PC-3 (cell line): ENCODE measurements at regions of chr2 and their contacts with region 1.

Region 1: DNA sequence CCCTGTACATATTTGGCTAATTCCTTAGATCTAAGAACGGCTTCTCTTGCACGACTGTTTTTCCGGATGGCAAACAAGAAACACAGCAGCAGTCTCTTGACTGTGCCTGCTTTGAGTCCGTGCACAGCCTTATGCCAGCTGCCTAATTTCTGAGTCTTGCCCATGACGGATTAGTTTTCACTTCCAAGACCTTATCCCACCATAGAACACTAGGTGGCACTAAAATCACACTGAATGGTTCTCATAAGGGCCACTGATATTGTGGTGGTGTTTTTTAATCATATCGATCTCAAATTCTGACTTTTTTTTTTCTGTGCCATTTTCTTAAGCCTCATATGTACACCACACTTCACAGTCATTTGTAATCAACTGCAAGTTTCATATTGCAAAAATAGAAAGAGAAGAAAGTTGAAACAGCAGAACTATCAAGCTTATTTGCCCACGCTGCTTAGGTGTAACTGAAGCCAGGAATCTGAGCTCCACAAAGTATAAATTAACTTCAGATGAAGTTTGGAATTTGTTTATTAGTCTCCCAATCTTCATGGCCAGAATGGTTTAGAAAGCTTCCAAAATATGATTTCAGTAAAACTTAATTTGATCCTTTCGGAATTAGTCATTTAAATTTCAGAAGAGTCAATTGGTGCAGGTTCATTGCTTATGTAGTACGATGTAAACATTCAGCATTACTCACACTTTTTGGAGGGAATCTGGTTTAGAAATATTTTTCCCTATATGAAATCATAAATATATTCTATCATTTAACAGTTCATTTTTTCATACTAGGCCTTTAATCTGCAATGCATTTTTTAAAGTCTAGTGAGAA is 45.5 kb upstream of the SCN7A start:
- DNase-seq: peak; percentile 95
- ATAC-seq: peak; percentile 98
- H3K4me3 ChIP-seq: peak overlapping the region; percentile 43
- H3K27ac ChIP-seq: no peak overlapping the region
- H3K4me1 ChIP-seq: peaks cover 8% of the 10 kb centered on the region; the same call in 1 of the 2 replicates
- H3K27me3 ChIP-seq: peaks cover 20% of the 10 kb centered on the region; the same call in 1 of the 2 replicates
- CTCF ChIP-seq: peak; percentile 99

Region 2: DNA sequence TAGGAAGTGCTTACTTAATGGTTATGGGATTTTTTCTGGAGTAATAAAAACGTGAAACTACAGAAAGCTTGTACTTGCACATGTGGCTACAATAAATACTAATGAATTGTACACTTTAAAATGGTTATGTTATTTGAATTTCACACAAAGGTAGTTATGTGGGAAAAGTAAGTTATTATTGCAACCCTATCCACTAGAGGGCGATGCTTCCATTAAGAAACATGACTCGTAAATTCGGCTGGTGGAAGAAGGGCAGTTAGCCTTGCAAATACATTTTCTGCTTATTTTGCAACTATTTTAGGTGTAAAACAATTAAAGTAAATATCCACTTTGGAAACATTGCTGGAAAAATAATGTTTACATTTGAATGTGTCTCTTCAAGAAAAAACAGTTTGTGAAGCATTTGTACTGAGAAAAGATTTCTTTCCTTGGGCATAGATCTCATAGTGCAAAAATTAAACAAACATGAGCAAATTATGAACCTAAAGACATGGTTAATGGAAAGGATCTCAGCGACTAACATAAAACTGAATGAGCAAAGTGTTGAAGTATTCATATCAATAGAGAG is 1138.2 kb before region 1 on chr2:
- CTCF ChIA-PET with region 1: interaction called, 6 read pairs
- POLR2A ChIA-PET with region 1: no interaction called
- intact Hi-C with region 1: loop called (anchors 1 kb)
- DNase-seq: peak; percentile 92
- ATAC-seq: peak; percentile 23
- H3K4me3 ChIP-seq: no peak overlapping the region
- H3K27ac ChIP-seq: no peak overlapping the region
- H3K4me1 ChIP-seq: peaks cover 23% of the 10 kb centered on the region
- H3K27me3 ChIP-seq: no peaks in the 10 kb centered on the region
- CTCF ChIP-seq: peak; percentile 97

Region 3: GRCh38 chr2:165874445-165875039 is 665.0 kb before region 1 on chr2:
- CTCF ChIA-PET with region 1: interaction called, 12 read pairs
- POLR2A ChIA-PET with region 1: no interaction called
- intact Hi-C with region 1: loop called (anchors 5 kb)
- DNase-seq: peak; percentile 93
- ATAC-seq: peak; percentile 94
- H3K4me3 ChIP-seq: peak overlapping the region; percentile 31
- H3K27ac ChIP-seq: no peak overlapping the region
- H3K4me1 ChIP-seq: peaks cover 10% of the 10 kb centered on the region
- H3K27me3 ChIP-seq: no peaks in the 10 kb centered on the region
- CTCF ChIP-seq: peak; percentile 96

Region 4: GRCh38 chr2:166651080-166651675 is 111.6 kb after region 1 on chr2:
- CTCF ChIA-PET with region 1: no interaction called
- POLR2A ChIA-PET with region 1: no interaction called
- intact Hi-C with region 1: loop called (anchors 1 kb)
- DNase-seq: peak; percentile 75
- ATAC-seq: peak; percentile 76
- H3K4me3 ChIP-seq: no peak overlapping the region
- H3K27ac ChIP-seq: 0 out of 2 replicates have a peak overlapping the region, but pooled peaks have one; percentile 6
- H3K4me1 ChIP-seq: peaks cover 33% of the 10 kb centered on the region
- H3K27me3 ChIP-seq: no peaks in the 10 kb centered on the region
- CTCF ChIP-seq: no peak

Region 5: DNA sequence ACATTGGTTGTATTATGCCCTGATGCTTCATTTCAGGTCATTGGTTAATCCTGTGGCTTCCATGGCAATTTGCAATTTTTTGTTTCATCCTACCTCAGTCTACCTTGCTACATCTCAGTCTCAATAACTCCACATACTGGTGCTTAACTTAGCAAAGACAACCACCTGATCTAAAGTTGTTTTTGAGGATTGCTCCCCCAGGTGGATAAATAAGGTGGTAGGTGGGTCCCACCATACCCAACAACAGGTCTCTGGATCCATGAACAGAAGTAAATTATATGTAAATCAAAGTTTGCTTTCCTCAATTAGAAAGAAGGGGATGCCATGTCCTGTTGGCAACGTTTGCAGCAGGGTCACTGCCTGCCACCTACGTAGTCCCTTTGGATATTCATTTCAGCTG is 355.7 kb after region 1 on chr2:
- CTCF ChIA-PET with region 1: no interaction called
- POLR2A ChIA-PET with region 1: no interaction called
- intact Hi-C with region 1: loop called (anchors 10 kb)
- DNase-seq: peak; percentile 25
- ATAC-seq: no peak
- H3K4me3 ChIP-seq: no peak overlapping the region
- H3K27ac ChIP-seq: no peak overlapping the region
- H3K4me1 ChIP-seq: no peaks in the 10 kb centered on the region
- H3K27me3 ChIP-seq: no peaks in the 10 kb centered on the region
- CTCF ChIP-seq: peak; percentile 43

Region 6: DNA sequence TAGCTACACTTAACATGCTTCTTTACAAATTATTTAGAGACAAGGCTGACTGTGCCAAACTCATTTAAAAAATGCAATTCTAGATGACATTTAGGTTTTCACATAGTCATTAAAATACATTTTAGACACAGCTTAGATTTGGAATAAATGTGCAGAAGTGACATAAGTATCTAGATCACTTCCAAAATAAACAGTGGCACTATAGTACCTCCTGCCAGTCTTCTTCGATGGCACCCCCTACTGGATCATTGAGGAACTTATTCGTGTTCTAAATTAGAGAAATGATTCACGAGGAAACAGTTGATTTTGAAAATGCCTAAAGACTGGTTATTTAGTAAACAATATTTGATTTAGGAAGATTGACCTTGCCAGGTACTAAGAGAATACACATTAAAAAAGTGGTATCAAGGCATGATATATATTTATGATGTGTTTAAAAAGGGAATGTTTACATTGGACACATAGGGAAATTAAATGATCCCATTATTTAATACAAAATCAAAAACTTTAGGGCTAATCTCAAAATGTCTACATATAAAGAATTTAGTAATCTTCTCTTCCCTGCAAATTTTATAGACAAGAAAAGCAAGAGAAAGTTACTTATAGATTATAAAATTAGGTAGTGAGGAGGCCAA is 672.6 kb after region 1 on chr2:
- CTCF ChIA-PET with region 1: no interaction called
- POLR2A ChIA-PET with region 1: no interaction called
- intact Hi-C with region 1: loop called (anchors 1 kb)
- DNase-seq: peak; percentile 90
- ATAC-seq: peak; percentile 72
- H3K4me3 ChIP-seq: no peak overlapping the region
- H3K27ac ChIP-seq: no peak overlapping the region
- H3K4me1 ChIP-seq: 0 out of 2 replicates have a peak, but pooled peaks cover 5% of the 10 kb centered on the region
- H3K27me3 ChIP-seq: no peaks in the 10 kb centered on the region
- CTCF ChIP-seq: peak; percentile 91

Region 7: GRCh38 chr2:168118733-168119514 is 1579.4 kb after region 1 on chr2:
- CTCF ChIA-PET with region 1: no interaction called
- POLR2A ChIA-PET with region 1: no interaction called
- intact Hi-C with region 1: loop called (anchors 10 kb)
- DNase-seq: peak; percentile 85
- ATAC-seq: peak; percentile 68
- H3K4me3 ChIP-seq: no peak overlapping the region
- H3K27ac ChIP-seq: no peak overlapping the region
- H3K4me1 ChIP-seq: no peaks in the 10 kb centered on the region
- H3K27me3 ChIP-seq: no peaks in the 10 kb centered on the region
- CTCF ChIP-seq: peak; percentile 87